Activated B cell treated with CpG ODN at 0.5 μM for 24 hours (primary cell): ENCODE measurements at regions of chr6 and their contacts with region 1.

Region 1: DNA sequence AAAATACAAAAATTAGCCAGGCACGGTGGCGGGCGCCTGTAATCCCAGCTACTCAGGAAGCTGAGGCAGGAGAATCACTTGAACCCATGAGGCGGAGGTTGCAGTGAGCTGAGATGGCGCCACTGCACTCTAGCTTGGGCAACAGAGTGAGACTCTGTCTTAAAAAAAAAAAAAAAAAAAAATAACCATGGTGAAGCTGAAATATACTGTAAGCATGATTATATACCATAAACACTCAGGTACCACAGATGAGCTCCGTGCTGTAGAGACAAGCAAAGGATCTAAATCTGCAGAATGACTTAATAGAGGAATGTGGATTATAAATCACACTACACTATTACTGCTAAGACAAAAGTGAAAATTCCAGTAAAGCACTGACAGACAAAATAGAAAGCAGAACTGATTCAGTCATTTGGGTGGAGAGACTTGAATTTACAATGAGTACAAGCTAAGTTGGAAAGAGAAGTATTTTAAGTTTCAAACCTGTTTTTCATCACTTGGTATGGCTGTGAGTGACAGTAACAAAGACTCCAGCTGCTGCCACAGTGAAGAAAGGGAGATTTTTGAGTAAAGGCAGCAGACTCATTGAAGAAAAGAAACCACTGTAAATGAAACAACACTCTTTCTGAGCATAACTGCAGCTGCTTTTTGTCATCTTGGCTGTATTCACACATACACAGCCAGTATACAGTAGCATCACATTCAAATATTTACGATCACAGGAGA is 322.1 kb downstream of the RNGTT start:
- DNase-seq: no peak
- ATAC-seq: peak; percentile 65
- H3K4me3 Mint-ChIP-seq: peak overlapping the region; percentile 24
- H3K27ac Mint-ChIP-seq: peak overlapping the region; percentile 78
- H3K4me1 Mint-ChIP-seq: peaks cover 36% of the 10 kb centered on the region
- H3K27me3 Mint-ChIP-seq: no peaks in the 10 kb centered on the region
- CTCF ChIP-seq: no peak

Region 2: GRCh38 chr6:88599561-88599960 is 41.8 kb before region 1 on chr6:
- CTCF ChIA-PET with region 1: no interaction called
- POLR2A ChIA-PET with region 1: no interaction called
- intact Hi-C with region 1: no loop called
- DNase-seq: no peak
- ATAC-seq: peak; percentile 37
- H3K4me3 Mint-ChIP-seq: no peak overlapping the region
- H3K27ac Mint-ChIP-seq: no peak overlapping the region
- H3K4me1 Mint-ChIP-seq: no peaks in the 10 kb centered on the region
- H3K27me3 Mint-ChIP-seq: no peaks in the 10 kb centered on the region
- CTCF ChIP-seq: no peak

Region 3: GRCh38 chr6:88629838-88630494 is 11.4 kb before region 1 on chr6:
- CTCF ChIA-PET with region 1: interaction called, 12 read pairs
- POLR2A ChIA-PET with region 1: interaction called, 3 read pairs
- intact Hi-C with region 1: no loop called
- DNase-seq: no peak
- ATAC-seq: peak; percentile 65
- H3K4me3 Mint-ChIP-seq: no peak overlapping the region
- H3K27ac Mint-ChIP-seq: no peak overlapping the region
- H3K4me1 Mint-ChIP-seq: peaks cover 43% of the 10 kb centered on the region
- H3K27me3 Mint-ChIP-seq: no peaks in the 10 kb centered on the region
- CTCF ChIP-seq: no peak

Region 4: DNA sequence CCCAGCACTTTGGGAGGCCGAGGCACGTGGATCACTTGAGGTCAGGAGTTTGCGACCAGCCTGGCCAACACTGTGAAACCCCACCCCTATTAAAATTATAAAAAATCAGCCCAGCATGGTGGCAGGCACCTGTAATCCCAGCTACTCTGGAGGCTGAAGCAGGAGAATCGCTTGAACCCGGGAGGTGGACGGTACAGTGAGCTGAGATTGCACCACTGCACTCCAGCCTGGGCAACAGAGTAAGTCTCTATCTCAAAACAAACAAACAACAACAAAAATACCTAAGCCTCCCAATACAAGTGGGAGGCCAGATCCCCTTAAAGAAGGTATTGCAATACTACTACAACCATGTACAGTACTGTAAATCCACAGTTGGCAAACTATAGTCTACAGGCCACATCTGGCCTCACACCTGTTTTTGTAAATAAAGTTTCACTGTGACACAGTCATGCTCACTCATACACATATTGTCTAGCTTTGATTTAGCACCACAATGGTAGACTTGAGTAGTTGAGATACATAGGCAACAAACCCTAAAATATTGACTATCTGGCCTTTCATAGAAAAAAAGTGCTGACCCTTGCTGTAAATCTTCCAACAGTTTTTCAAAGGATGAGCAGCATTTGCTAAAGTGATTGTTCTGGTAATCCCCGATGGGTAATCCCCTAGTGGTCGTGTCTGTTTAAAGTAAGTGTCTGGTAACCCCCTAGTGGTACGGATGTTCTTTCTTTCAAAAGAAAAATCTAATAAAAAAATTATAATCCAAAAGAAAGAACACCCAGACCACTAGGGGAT is 120.1 kb after region 1 on chr6:
- CTCF ChIA-PET with region 1: no interaction called
- POLR2A ChIA-PET with region 1: no interaction called
- intact Hi-C with region 1: no loop called
- DNase-seq: no peak
- ATAC-seq: peak; percentile 84
- H3K4me3 Mint-ChIP-seq: peak overlapping the region; percentile 19
- H3K27ac Mint-ChIP-seq: peak overlapping the region; percentile 75
- H3K4me1 Mint-ChIP-seq: peaks cover 33% of the 10 kb centered on the region
- H3K27me3 Mint-ChIP-seq: no peaks in the 10 kb centered on the region
- CTCF ChIP-seq: no peak